ENCODE measurements at regions of chr20 and their contacts with region 1.

Region 1: GRCh38 chr20:53643031-53643832 is 49.6 kb upstream of the ZNF217 start:
- DNase-seq: peak; percentile 67 to 84 (median 73)
- H3K4me3 ChIP-seq: peak overlapping the region; percentile 19 to 26
- H3K4me3 Mint-ChIP-seq: peak overlapping the region; percentile 75 to 93 (median 86)
- H3K27ac ChIP-seq: peak overlapping the region; percentile 59
- H3K27ac Mint-ChIP-seq: peak overlapping the region; percentile 94 to 99 (median 98)
- H3K4me1 ChIP-seq: peaks cover 37% of the 10 kb centered on the region
- H3K4me1 Mint-ChIP-seq: peaks cover 14 to 52% (median 37%) of the 10 kb centered on the region in 4 donors
- H3K27me3 ChIP-seq: no peaks in the 10 kb centered on the region
- H3K27me3 Mint-ChIP-seq: no peaks in the 10 kb centered on the region

Region 2: GRCh38 chr20:53586640-53587039 is 56.6 kb before region 1 on chr20:
- CTCF ChIA-PET with region 1: interaction called, 6 read pairs
- POLR2A ChIA-PET with region 1: interaction called, 80 read pairs
- intact Hi-C with region 1: no loop called
- DNase-seq: no peak
- H3K4me3 ChIP-seq: peak overlapping the region in 1 of 2 donors; percentile 6
- H3K4me3 Mint-ChIP-seq: peak overlapping the region; percentile 78 to 93 (median 86)
- H3K27ac ChIP-seq: peak overlapping the region; percentile 68
- H3K27ac Mint-ChIP-seq: peak overlapping the region; percentile 93 to 100 (median 97)
- H3K4me1 ChIP-seq: peaks cover 79% of the 10 kb centered on the region
- H3K4me1 Mint-ChIP-seq: peaks cover 43 to 91% (median 64%) of the 10 kb centered on the region in 4 donors
- H3K27me3 ChIP-seq: no peaks in the 10 kb centered on the region
- H3K27me3 Mint-ChIP-seq: no peaks in the 10 kb centered on the region

Region 3: DNA sequence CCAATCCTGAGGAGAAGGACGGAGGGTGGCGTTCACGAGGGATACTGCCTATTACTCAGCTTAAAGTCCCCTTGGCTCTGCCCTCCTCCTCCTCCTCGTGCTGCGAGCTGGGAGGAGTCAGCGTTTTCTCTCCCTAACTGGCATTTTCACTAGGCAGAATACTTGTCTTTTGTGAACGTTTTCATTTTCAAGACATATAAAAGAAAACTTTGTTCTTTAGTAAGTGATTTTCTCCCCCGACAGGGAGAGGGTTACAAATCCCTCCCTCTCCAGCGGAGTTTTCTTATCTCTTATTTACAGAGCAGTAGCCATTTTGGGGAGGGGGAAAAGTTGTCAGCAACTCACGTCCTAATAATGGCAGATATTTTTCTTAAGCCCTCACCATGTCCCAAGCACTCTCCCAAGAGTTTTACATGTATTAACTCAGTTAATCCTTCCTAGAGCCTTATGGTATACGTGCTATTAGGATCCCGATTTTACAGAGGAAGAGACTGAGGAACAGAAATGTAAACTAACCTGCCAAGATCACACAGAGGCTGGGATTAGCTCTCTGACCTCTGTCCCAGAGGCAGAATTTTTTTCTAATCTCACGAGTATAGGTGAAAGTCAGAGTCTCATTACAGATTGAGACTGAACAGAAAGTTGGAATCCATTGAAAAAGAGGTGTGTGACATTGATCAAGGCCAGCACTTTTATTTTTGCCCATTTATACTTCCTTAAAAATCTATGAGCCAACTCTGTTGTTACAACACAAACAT is 19.6 kb before region 1 on chr20:
- CTCF ChIA-PET with region 1: interaction called, 16 read pairs
- POLR2A ChIA-PET with region 1: interaction called, 67 read pairs
- intact Hi-C with region 1: loop called (anchors 2 kb)
- DNase-seq: peak; percentile 29 to 47 (median 31)
- H3K4me3 ChIP-seq: peak overlapping the region; percentile 43 to 67
- H3K4me3 Mint-ChIP-seq: peak overlapping the region; percentile 82 to 90 (median 88)
- H3K27ac ChIP-seq: peak overlapping the region; percentile 58
- H3K27ac Mint-ChIP-seq: peak overlapping the region; percentile 88 to 97 (median 95)
- H3K4me1 ChIP-seq: peaks cover 37% of the 10 kb centered on the region
- H3K4me1 Mint-ChIP-seq: peaks cover 29 to 38% (median 35%) of the 10 kb centered on the region in 4 donors
- H3K27me3 ChIP-seq: no peaks in the 10 kb centered on the region
- H3K27me3 Mint-ChIP-seq: no peaks in the 10 kb centered on the region

Region 4: GRCh38 chr20:53660078-53660909 is 17.1 kb after region 1 on chr20:
- CTCF ChIA-PET with region 1: interaction called, 11 read pairs
- POLR2A ChIA-PET with region 1: interaction called, 44 read pairs
- intact Hi-C with region 1: loop called (anchors 1 kb)
- DNase-seq: peak in 2 of 5 donors; percentile 16 to 18
- H3K4me3 ChIP-seq: peak overlapping the region; percentile 56 to 66
- H3K4me3 Mint-ChIP-seq: peak overlapping the region; percentile 77 to 91 (median 88)
- H3K27ac ChIP-seq: peak overlapping the region; percentile 41
- H3K27ac Mint-ChIP-seq: peak overlapping the region; percentile 63 to 93 (median 89)
- H3K4me1 ChIP-seq: peaks cover 46% of the 10 kb centered on the region
- H3K4me1 Mint-ChIP-seq: peaks cover 36 to 70% (median 50%) of the 10 kb centered on the region in 4 donors
- H3K27me3 ChIP-seq: no peaks in the 10 kb centered on the region
- H3K27me3 Mint-ChIP-seq: no peaks in the 10 kb centered on the region

Region 5: DNA sequence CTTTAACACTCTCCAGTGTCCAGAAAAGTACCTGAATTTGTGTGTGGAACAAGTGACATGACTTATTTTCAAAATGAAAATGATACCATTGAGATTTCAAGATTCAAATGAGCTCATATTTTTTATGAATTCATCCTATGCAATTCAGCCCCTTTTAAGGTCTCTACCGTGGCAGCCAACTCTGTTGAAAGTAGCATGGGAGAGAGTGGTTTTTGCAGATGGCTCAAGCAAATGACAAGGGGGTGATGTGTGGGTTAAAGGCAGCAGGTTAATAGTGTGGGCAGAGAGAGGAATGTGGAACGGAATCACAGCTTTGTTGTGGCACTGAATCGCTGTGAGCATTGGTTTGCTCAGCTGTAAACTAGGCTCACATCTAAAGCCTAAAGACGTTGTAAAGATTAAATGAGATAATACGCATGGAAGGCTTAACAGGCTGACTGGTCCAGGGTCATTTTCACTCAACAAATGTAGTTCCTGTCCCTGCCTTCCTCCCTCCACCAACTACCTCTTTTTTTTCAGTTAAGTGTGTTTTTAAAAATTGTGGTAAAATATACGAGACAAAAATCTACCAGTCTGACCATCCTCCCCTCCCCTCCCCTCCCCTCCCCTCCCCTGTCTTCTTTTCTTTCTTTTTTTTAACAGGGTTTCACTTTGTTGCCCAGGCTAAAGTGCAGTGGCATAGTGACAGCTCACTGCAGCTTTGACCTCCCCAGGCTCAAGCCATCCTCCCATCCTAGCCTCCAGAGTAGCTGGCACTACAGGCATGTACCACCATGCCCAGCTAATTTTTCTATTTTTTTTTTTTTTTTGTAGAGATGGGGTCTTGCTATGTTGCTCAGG is 65.1 kb after region 1 on chr20:
- CTCF ChIA-PET with region 1: interaction called, 3 read pairs
- POLR2A ChIA-PET with region 1: interaction called, 11 read pairs
- intact Hi-C with region 1: loop called (anchors 2 kb)
- DNase-seq: peak in 4 of 5 donors; percentile 17 to 41 (median 26)
- H3K4me3 ChIP-seq: no peak overlapping the region
- H3K4me3 Mint-ChIP-seq: peak overlapping the region in 7 of 8 donors; percentile 31 to 91 (median 69)
- H3K27ac ChIP-seq: peak overlapping the region; percentile 3
- H3K27ac Mint-ChIP-seq: peak overlapping the region; percentile 76 to 98 (median 92)
- H3K4me1 ChIP-seq: peaks cover 39% of the 10 kb centered on the region
- H3K4me1 Mint-ChIP-seq: peaks cover 31 to 47% (median 36%) of the 10 kb centered on the region in 4 donors
- H3K27me3 ChIP-seq: no peaks in the 10 kb centered on the region
- H3K27me3 Mint-ChIP-seq: no peaks in the 10 kb centered on the region

Region 6: GRCh38 chr20:53905019-53905847 is 262.0 kb after region 1 on chr20:
- CTCF ChIA-PET with region 1: no interaction called
- POLR2A ChIA-PET with region 1: no interaction called
- intact Hi-C with region 1: no loop called
- DNase-seq: no peak
- H3K4me3 ChIP-seq: no peak overlapping the region
- H3K4me3 Mint-ChIP-seq: no peak overlapping the region
- H3K27ac ChIP-seq: no peak overlapping the region
- H3K27ac Mint-ChIP-seq: peak overlapping the region in 2 of 7 donors; percentile 16 to 41
- H3K4me1 ChIP-seq: peaks cover 2% of the 10 kb centered on the region
- H3K4me1 Mint-ChIP-seq: peaks cover 3 to 12% (median 9%) of the 10 kb centered on the region in 4 donors
- H3K27me3 ChIP-seq: no peaks in the 10 kb centered on the region
- H3K27me3 Mint-ChIP-seq: no peaks in the 10 kb centered on the region

Measured in CD4-positive, alpha-beta memory T cell (primary cell).